AG04450 (cell line): ENCODE measurements at regions of chr3 and their contacts with region 1.

Region 1: DNA sequence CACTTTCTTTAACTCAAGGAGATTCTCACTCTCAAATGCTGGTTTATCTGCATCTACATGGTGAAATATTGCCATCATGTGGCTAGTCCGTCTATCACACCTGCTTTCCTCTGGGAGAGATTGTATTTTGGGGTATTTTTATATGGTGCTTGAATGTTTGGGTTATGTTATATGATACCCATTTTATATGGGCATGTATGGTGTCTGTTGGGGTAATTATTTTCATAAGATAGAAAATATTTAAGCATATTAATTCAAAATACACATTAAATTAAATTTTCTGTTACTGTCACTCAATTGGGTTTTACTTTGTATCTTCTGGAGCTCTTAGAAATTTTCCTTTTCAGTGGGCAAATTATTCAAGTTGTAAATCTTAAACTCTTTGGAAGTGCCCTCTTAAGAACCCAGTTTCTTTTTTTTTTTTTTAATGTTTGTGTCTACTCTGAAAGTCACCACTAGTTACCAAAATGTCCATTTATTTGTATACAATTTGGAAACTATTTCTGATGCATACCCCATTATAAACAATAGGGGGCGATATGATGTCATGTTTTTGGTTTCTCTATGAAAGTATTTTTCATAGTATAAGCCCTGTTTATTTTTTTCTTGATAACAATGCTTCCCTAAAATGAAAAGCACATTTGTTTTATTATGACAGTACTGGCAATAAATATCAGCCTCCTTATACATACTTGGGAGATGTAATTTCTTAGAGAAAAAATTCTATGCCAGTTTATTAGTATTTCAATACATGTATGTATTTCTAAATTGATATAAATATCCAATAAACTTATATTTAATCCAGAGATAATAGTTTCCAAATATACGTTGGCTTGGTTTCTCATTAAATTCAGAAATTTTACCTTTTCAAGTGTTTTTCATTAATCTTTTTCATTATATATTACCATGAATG is 36.1 kb upstream of the PLSCR5 start:
- DNase-seq: peak; percentile 8
- H3K4me3 ChIP-seq: no peak overlapping the region
- H3K27ac ChIP-seq: no peak overlapping the region
- H3K27me3 ChIP-seq: no peaks in the 10 kb centered on the region
- CTCF ChIP-seq: peak; percentile 57

Region 2: GRCh38 chr3:146178006-146178689 is 463.1 kb before region 1 on chr3:
- CTCF ChIA-PET with region 1: no interaction called
- POLR2A ChIA-PET with region 1: no interaction called
- DNase-seq: no peak
- H3K4me3 ChIP-seq: no peak overlapping the region
- H3K27ac ChIP-seq: no peak overlapping the region
- H3K27me3 ChIP-seq: no peaks in the 10 kb centered on the region
- CTCF ChIP-seq: no peak

Region 3: GRCh38 chr3:146589899-146590508 is 51.2 kb before region 1 on chr3:
- CTCF ChIA-PET with region 1: interaction called, 29 read pairs
- POLR2A ChIA-PET with region 1: no interaction called
- DNase-seq: peak; percentile 15
- H3K4me3 ChIP-seq: no peak overlapping the region
- H3K27ac ChIP-seq: no peak overlapping the region
- H3K27me3 ChIP-seq: no peaks in the 10 kb centered on the region
- CTCF ChIP-seq: peak; percentile 61

Region 4: GRCh38 chr3:146626403-146627122 is 14.6 kb before region 1 on chr3:
- CTCF ChIA-PET with region 1: interaction called, 16 read pairs
- POLR2A ChIA-PET with region 1: no interaction called
- DNase-seq: no peak
- H3K4me3 ChIP-seq: no peak overlapping the region
- H3K27ac ChIP-seq: no peak overlapping the region
- H3K27me3 ChIP-seq: no peaks in the 10 kb centered on the region
- CTCF ChIP-seq: no peak

Region 5: DNA sequence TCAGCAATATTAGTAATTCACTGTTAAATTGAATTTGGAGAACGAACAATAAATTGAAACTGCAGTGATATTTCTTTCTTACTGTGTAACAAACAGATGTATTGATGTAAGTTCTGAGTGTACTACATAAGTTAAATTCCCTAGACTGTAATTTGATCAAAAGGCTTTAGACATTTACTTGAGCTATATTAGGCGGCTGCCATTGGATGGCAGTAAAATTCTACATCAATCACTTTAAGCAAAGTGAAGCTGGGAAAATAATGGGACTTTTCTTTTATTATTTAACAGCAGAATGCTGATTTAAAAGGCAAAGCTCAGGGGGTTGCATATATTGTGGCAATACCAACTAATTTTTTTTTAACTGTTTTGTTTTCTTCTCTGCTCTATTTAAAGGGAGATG is 176.5 kb after region 1 on chr3:
- CTCF ChIA-PET with region 1: no interaction called
- POLR2A ChIA-PET with region 1: no interaction called
- DNase-seq: no peak
- H3K4me3 ChIP-seq: no peak overlapping the region
- H3K27ac ChIP-seq: no peak overlapping the region
- H3K27me3 ChIP-seq: no peaks in the 10 kb centered on the region
- CTCF ChIP-seq: 0 out of 2 replicates have a peak, but pooled peaks have one; percentile 21

Region 6: DNA sequence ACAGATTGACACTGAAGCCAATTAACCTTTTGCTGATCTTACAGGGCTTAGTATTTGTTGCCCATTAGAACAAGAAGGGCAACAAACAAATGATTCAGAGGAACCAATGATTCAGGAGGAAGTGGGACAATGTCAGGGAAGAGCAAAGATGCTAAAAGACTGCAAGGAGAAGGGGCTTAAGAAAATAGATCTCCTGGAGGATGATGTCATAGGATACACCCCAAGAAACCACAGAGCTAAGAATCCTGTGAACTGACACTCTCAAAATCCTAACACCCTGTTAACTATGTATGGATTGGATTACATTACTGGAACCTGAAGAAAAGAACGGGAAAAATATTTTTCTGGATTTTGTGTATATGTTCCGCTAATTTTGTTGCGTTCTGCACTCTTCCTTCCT is 686.6 kb after region 1 on chr3:
- CTCF ChIA-PET with region 1: no interaction called
- POLR2A ChIA-PET with region 1: no interaction called
- DNase-seq: no peak
- H3K4me3 ChIP-seq: no peak overlapping the region
- H3K27ac ChIP-seq: no peak overlapping the region
- H3K27me3 ChIP-seq: no peaks in the 10 kb centered on the region
- CTCF ChIP-seq: no peak